ENCODE measurements at regions of chr19 and their contacts with region 1.

Region 1: GRCh38 chr19:55117636-55118391 is at the start of gene PPP1R12C:
- DNase-seq: peak; percentile 99
- H3K4me3 Mint-ChIP-seq: peak within 1 kb of the TSS; percentile 98
- H3K27ac Mint-ChIP-seq: peak within 1 kb of the TSS; percentile 90
- H3K4me1 Mint-ChIP-seq: peaks cover 23% of the 10 kb centered on the region
- H3K27me3 Mint-ChIP-seq: peaks cover 2% of the 10 kb centered on the region
- total RNA-seq, gene PPP1R12C: 41.2 to 42.1 TPM

Region 2: DNA sequence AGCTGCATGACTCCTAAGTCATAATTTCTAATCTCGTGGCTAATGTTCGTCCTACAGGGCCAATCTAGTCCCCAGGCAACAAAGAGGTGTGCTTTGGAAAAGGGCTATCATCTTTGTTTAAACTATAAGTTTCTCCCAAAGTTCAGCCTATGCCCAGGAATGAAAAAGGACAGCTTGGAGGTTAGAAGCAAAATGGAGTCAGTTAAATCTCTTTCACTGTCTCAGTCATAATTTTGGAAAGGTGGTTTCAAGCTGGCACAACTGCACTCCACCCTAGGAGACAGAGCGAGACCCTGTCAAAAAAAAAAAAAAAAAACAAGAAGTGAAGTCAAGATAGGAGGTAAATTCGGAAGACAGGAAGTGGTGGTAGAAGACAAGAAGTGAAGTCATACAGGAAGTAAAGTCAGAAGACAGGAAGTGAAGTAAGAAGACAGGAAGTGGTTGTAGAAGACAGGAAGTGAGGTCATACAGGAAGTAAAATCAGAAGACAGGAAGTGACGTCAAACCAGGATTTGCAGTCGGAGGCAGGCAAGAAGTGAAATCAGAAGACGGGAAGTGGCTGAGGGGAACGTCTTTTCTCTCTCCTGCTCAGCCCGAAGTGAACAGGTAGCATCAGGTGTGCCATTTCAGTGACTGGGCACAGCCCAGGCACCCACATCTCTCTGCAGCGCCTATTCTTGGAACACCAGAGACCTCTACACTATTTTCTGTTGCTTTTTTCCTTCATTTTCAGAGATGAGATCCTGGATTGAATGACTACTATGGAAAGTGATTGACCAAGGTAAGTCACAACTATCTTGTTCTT is 111.9 kb before region 1 on chr19:
- CTCF ChIA-PET with region 1: no interaction called
- intact Hi-C with region 1: loop called (anchors 5 kb)
- DNase-seq: peak; percentile 66
- H3K4me3 Mint-ChIP-seq: peak overlapping the region; percentile 81
- H3K27ac Mint-ChIP-seq: peak overlapping the region; percentile 77
- H3K4me1 Mint-ChIP-seq: peaks cover 23% of the 10 kb centered on the region
- H3K27me3 Mint-ChIP-seq: peaks cover 18% of the 10 kb centered on the region

Region 3: DNA sequence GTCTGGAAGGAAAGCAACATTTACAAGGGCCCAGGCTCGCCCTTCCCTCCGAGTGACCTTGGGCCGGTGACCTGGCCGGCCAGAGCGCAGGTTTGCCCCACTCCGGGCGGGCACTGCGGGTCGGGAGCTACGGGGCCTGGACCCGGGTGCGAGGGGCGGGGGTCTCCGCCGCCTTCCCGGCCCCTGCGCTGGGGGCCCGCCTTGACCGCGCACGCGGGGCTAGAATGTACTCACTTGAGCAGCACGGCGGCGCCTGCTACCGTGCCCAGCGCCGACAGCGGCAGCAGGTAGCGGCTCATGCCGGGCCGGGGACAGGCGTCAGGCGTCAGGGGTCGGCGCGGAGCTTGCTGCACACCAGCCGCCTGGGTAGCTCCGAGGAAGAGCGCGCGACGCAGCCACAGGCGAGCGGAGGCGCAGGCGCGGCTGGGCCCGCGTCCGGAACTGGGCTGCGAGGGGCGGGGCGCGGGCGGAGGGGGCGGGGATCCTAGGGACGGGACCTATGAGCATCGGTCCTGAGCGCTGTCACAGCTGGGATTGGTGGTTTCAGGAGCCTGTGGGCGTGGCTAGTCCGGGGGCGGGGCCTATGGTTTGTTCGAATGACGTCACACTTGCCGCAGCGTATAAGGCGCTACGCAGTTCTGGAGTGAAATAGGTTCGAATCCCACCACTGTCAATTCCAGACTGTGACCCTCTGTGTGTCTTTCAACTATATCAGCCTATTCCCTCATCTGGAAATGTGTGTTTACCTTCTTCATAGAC is 54.9 kb before region 1 on chr19 and contains the start of gene RDH13:
- CTCF ChIA-PET with region 1: no interaction called
- intact Hi-C with region 1: loop called (anchors 1 kb)
- DNase-seq: peak; percentile 99
- H3K4me3 Mint-ChIP-seq: peak within 1 kb of the TSS; percentile 84
- H3K27ac Mint-ChIP-seq: no peak within 1 kb of the TSS
- H3K4me1 Mint-ChIP-seq: peaks cover 18% of the 10 kb centered on the region
- H3K27me3 Mint-ChIP-seq: peaks cover 24% of the 10 kb centered on the region
- total RNA-seq, gene RDH13: 8.7 to 8.9 TPM

Region 4: GRCh38 chr19:55080968-55081772 is 36.6 kb before region 1 on chr19:
- CTCF ChIA-PET with region 1: no interaction called
- intact Hi-C with region 1: loop called (anchors 2 kb)
- DNase-seq: peak; percentile 92
- H3K4me3 Mint-ChIP-seq: peak overlapping the region; percentile 73
- H3K27ac Mint-ChIP-seq: no peak overlapping the region
- H3K4me1 Mint-ChIP-seq: peaks cover 25% of the 10 kb centered on the region
- H3K27me3 Mint-ChIP-seq: peaks cover 68% of the 10 kb centered on the region

Region 5: GRCh38 chr19:55160128-55160985 is 42.5 kb after region 1 on chr19:
- CTCF ChIA-PET with region 1: no interaction called
- intact Hi-C with region 1: loop called (anchors 2 kb)
- DNase-seq: peak; percentile 94
- H3K4me3 Mint-ChIP-seq: no peak overlapping the region
- H3K27ac Mint-ChIP-seq: no peak overlapping the region
- H3K4me1 Mint-ChIP-seq: peaks cover 9% of the 10 kb centered on the region
- H3K27me3 Mint-ChIP-seq: peaks cover 48% of the 10 kb centered on the region

Region 6: DNA sequence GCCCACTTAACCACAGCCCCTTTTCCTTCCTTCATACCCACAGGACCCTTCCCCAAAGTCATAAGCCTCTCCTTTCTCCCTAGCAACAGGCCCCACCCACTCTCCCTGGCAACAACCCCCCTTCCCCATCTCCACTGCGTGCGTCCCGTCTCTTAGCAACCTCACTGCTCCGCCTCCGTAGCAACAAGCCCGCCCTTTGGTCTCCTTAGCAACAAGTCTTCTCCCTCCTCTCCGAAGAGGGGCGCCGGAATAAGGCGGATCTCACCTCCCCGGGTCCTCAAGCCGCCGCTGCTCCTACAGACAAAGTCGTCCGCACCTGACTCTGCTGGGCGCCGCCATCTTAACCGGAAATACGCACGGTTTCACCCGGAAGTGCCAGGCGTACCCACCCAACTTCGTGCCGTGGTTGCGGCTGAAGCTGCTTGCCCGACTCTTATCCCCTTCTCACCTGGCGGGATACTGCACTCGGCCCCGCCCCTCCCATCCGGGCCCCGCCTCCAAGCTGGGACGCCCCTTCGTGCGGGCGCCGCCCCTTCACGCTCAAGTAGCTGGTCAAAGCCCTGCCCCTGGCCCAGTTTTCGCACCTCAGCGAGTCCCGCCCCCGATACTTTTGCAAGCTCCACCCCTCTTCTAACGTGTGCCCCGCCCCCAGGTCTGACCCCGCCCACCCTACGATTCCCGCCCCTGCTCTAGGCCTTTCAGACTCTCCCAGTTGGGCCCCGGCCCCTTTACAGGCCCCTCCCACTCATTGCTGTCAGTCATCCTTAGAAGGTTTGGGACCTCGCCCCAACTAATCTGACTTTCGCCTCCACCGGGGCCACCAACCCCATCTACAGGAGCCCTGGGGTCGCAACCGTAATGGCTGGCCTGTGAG is 162.2 kb after region 1 on chr19 and contains the start of gene HSPBP1:
- CTCF ChIA-PET with region 1: no interaction called
- intact Hi-C with region 1: loop called (anchors 2 kb)
- DNase-seq: peak; percentile 97
- H3K4me3 Mint-ChIP-seq: peak within 1 kb of the TSS; percentile 100
- H3K27ac Mint-ChIP-seq: peak within 1 kb of the TSS; percentile 93
- H3K4me1 Mint-ChIP-seq: peaks cover 28% of the 10 kb centered on the region
- H3K27me3 Mint-ChIP-seq: no peaks in the 10 kb centered on the region
- total RNA-seq, gene HSPBP1: 44.3 to 45.0 TPM

Measured in activated naive CD4-positive, alpha-beta T cell treated with anti-CD3 and anti-CD28 coated beads for 36 hours (primary cell).